Activated B cell treated with CpG ODN at 0.5 μM for 24 hours (primary cell): ENCODE measurements at regions of chr7 and their contacts with region 1.

Region 1: DNA sequence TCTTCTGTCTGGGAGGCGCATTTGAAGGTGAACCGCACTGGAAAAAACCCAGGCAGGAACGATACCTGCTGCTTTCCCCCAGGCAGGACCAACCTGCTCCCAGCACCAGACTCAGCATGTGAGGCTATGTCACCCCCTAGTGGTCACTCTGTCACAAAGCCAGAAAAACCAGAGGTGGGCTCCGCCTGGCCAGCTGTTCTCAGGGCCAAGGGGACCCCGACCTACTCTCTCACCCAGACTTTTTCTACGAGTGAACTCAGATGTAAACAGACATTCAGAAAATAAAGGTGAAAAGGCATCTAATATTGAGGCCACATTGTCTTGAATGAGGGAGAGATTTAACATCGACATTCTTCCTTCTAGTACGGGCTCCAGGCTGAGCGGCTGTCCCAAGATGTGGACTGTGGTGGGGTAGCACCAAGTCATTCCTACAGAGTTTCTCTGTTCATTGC is 117.3 kb downstream of the PRKAG2 start:
- DNase-seq: no peak
- ATAC-seq: peak; percentile 70
- H3K4me3 Mint-ChIP-seq: no peak overlapping the region
- H3K27ac Mint-ChIP-seq: no peak overlapping the region
- H3K4me1 Mint-ChIP-seq: peaks cover 11% of the 10 kb centered on the region
- H3K27me3 Mint-ChIP-seq: no peaks in the 10 kb centered on the region
- CTCF ChIP-seq: no peak

Region 2: DNA sequence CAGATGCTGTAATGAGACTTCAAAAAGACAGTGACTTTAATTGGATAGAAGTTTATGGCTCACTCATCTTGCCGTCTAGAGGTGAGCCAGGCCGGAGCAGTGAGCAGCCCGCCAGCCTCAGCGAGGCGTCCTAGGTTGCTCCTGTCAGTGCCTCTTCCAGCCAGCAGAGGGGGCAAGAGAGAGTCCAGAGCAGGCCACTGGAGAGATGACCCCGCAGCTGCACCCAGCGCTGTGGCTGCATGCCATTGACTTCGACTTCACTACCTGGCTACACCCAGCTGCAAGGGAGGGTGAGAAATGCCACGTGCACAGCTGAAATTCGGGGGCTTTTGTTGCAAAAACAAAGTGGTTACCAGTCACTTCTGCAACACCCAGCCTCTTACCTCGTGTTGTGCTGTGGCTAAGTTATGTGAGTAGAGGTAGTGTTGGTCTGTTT is 391.5 kb before region 1 on chr7:
- CTCF ChIA-PET with region 1: interaction called, 26 read pairs
- POLR2A ChIA-PET with region 1: no interaction called
- intact Hi-C with region 1: loop called (anchors 1 kb)
- DNase-seq: peak; percentile 64
- ATAC-seq: peak; percentile 100
- H3K4me3 Mint-ChIP-seq: no peak overlapping the region
- H3K27ac Mint-ChIP-seq: no peak overlapping the region
- H3K4me1 Mint-ChIP-seq: peaks cover 6% of the 10 kb centered on the region
- H3K27me3 Mint-ChIP-seq: no peaks in the 10 kb centered on the region
- CTCF ChIP-seq: peak; percentile 37

Region 3: DNA sequence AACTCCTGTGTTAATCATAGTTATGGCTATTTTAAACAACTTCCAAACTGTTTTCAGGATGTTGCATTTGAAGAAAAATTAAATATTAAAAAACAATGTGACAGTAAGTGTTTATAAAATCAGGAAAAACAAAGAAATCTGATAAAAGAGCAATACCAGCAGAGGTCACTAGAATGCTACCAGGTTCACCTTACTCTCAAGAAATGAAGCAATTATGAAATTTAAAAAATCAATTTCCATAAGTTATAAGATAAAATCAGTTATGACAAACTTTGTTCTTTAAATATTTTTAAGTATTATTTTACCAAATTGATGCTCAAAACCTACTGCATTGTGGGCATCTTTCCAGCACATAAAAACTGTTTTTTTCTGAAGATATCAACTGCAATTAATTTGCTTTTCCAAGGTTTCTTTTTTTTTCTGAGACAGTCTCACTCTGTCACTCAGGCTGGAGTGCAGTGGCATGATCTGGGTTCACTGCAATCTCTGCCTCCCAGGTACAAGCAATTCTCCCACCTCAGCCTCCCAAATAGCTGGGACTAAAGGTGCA is 189.2 kb before region 1 on chr7:
- CTCF ChIA-PET with region 1: interaction called, 10 read pairs
- POLR2A ChIA-PET with region 1: no interaction called
- intact Hi-C with region 1: loop called (anchors 1 kb)
- DNase-seq: no peak
- ATAC-seq: no peak
- H3K4me3 Mint-ChIP-seq: no peak overlapping the region
- H3K27ac Mint-ChIP-seq: no peak overlapping the region
- H3K4me1 Mint-ChIP-seq: no peaks in the 10 kb centered on the region
- H3K27me3 Mint-ChIP-seq: no peaks in the 10 kb centered on the region
- CTCF ChIP-seq: no peak

Region 4: DNA sequence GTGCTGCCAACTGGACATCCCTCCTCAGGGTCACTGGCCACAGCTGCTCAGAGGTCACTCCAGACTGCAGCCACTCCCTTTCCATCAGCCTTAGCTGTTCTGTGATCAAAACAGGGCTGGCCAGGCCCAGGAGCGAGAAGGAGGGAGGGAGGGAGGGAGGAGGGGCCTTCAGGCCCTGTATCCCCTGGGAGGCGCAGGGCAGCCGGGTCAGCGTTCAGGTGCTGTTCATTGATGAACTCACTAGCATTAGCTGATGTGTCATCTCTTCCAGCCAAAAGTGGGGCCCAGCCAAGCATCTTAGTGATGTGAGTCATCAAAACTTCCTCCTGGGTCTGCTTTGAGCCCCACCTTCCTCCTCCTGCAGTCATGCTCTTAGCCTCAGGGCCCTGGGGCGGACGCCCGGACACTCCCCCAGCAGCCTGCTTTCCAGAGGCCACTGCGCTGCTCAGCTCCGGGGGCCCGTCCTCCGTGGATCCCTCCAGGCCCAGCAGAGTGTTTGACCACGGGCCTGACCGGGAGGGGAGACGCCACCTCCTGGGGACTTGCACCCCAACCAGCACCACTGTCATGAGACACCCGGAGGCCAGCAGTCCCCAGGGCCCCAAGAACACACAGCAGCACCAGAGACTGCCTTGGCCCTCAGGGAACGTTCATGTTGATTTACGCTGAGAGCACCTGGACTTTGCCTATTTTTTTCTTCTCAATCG is 31.9 kb before region 1 on chr7:
- CTCF ChIA-PET with region 1: interaction called, 5 read pairs
- POLR2A ChIA-PET with region 1: no interaction called
- intact Hi-C with region 1: loop called (anchors 2 kb)
- DNase-seq: peak; percentile 44
- ATAC-seq: peak; percentile 83
- H3K4me3 Mint-ChIP-seq: peak overlapping the region; percentile 11
- H3K27ac Mint-ChIP-seq: no peak overlapping the region
- H3K4me1 Mint-ChIP-seq: peaks cover 37% of the 10 kb centered on the region
- H3K27me3 Mint-ChIP-seq: no peaks in the 10 kb centered on the region
- CTCF ChIP-seq: no peak

Region 5: GRCh38 chr7:151814400-151815009 is 54.9 kb after region 1 on chr7:
- CTCF ChIA-PET with region 1: no interaction called
- POLR2A ChIA-PET with region 1: no interaction called
- intact Hi-C with region 1: no loop called
- DNase-seq: no peak
- ATAC-seq: no peak
- H3K4me3 Mint-ChIP-seq: no peak overlapping the region
- H3K27ac Mint-ChIP-seq: no peak overlapping the region
- H3K4me1 Mint-ChIP-seq: peaks cover 19% of the 10 kb centered on the region
- H3K27me3 Mint-ChIP-seq: no peaks in the 10 kb centered on the region
- CTCF ChIP-seq: no peak

Region 6: DNA sequence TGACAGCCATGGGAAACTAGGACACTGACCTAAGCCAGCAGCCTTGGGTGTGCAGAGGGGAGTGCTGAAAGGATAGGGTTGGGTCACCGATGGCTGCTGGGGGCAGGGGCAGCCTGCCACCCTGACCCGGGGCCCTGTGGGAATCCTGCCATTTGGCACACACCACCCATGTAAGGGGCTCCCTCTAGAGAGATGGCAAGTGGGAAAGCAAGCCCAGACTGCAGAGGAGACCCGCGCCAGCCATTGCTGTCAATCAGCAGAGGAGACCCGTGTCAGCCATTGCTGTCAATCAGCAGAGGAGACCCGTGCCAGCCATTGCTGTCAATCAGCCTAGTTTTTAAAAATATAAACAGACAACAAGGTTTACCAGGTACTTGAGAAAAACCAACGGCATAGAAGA is 144.7 kb after region 1 on chr7:
- CTCF ChIA-PET with region 1: no interaction called
- POLR2A ChIA-PET with region 1: no interaction called
- intact Hi-C with region 1: no loop called
- DNase-seq: no peak
- ATAC-seq: no peak
- H3K4me3 Mint-ChIP-seq: no peak overlapping the region
- H3K27ac Mint-ChIP-seq: no peak overlapping the region
- H3K4me1 Mint-ChIP-seq: no peaks in the 10 kb centered on the region
- H3K27me3 Mint-ChIP-seq: peaks cover 35% of the 10 kb centered on the region
- CTCF ChIP-seq: no peak